Gastrocnemius medialis (tissue), 4 donors: ENCODE measurements at regions of chr1 and their contacts with region 1.

Region 1: GRCh38 chr1:67230539-67230938 is 64.3 kb downstream of the IL23R start:
- DNase-seq: no peak
- ATAC-seq: no peak
- H3K4me3 ChIP-seq: no peak overlapping the region
- H3K27ac ChIP-seq: no peak overlapping the region
- H3K4me1 ChIP-seq: no peaks in the 10 kb centered on the region
- H3K27me3 ChIP-seq: no peaks in the 10 kb centered on the region
- CTCF ChIP-seq: no peak
- POLR2A ChIP-seq: no peak

Region 2: GRCh38 chr1:66944330-66945274 is 285.9 kb before region 1 on chr1:
- in situ Hi-C with region 1: no loop called
- intact Hi-C with region 1: no loop called
- DNase-seq: peak; percentile 26 to 54
- ATAC-seq: peak; percentile 63 to 86
- H3K4me3 ChIP-seq: no peak overlapping the region
- H3K27ac ChIP-seq: peak overlapping the region; percentile 47 to 63 (median 61)
- H3K4me1 ChIP-seq: peaks cover 6 to 11% of the 10 kb centered on the region in 2 donors
- H3K27me3 ChIP-seq: no peaks in the 10 kb centered on the region
- CTCF ChIP-seq: no peak
- POLR2A ChIP-seq: no peak

Region 3: GRCh38 chr1:67489643-67490042 is 259.1 kb after region 1 on chr1:
- in situ Hi-C with region 1: no loop called
- intact Hi-C with region 1: loop called (anchors 5 kb)
- DNase-seq: no peak
- ATAC-seq: peak; percentile 90 to 92
- H3K4me3 ChIP-seq: no peak overlapping the region
- H3K27ac ChIP-seq: no peak overlapping the region
- H3K4me1 ChIP-seq: no peaks in the 10 kb centered on the region
- H3K27me3 ChIP-seq: no peaks in the 10 kb centered on the region
- CTCF ChIP-seq: peak; percentile 23 to 54 (median 26)
- POLR2A ChIP-seq: no peak